ENCODE measurements at regions of chr17 and their contacts with region 1.

Region 1: GRCh38 chr17:57849874-57850754 is at the start of gene MRPS23:
- DNase-seq: peak; percentile 99
- ATAC-seq: peak; percentile 82
- H3K4me3 ChIP-seq: peak within 1 kb of the TSS; percentile 88 to 93 (median 90)
- H3K27ac ChIP-seq: peak within 1 kb of the TSS; percentile 86
- H3K4me1 ChIP-seq: peaks cover 62% of the 10 kb centered on the region
- H3K27me3 ChIP-seq: no peaks in the 10 kb centered on the region; a peak in 1 of 5 replicates
- CTCF ChIP-seq: peak; percentile 34; the same call in 1 of the 2 replicates
- EP300 ChIP-seq: peak; percentile 55 to 76; a peak in 3 of 4 replicates
- POLR2A ChIP-seq: peak; percentile 80 to 86
- RAD21 ChIP-seq: peak; percentile 37; the same call in 1 of the 2 replicates
- total RNA-seq, gene MRPS23: 181 and 283 TPM in 2 replicates

Region 2: GRCh38 chr17:57838857-57839570 is 11.1 kb before region 1 on chr17:
- CTCF ChIA-PET with region 1: no interaction called
- POLR2A ChIA-PET with region 1: interaction called, 36 read pairs
- in situ Hi-C with region 1: no loop called
- intact Hi-C with region 1: loop called (anchors 1 kb)
- DNase-seq: no peak
- ATAC-seq: peak; percentile 10
- H3K4me3 ChIP-seq: no peak overlapping the region
- H3K27ac ChIP-seq: peak overlapping the region; percentile 60
- H3K4me1 ChIP-seq: peaks cover 74% of the 10 kb centered on the region
- H3K27me3 ChIP-seq: no peaks in the 10 kb centered on the region
- CTCF ChIP-seq: no peak
- EP300 ChIP-seq: no peak
- POLR2A ChIP-seq: no peak
- RAD21 ChIP-seq: no peak

Region 3: DNA sequence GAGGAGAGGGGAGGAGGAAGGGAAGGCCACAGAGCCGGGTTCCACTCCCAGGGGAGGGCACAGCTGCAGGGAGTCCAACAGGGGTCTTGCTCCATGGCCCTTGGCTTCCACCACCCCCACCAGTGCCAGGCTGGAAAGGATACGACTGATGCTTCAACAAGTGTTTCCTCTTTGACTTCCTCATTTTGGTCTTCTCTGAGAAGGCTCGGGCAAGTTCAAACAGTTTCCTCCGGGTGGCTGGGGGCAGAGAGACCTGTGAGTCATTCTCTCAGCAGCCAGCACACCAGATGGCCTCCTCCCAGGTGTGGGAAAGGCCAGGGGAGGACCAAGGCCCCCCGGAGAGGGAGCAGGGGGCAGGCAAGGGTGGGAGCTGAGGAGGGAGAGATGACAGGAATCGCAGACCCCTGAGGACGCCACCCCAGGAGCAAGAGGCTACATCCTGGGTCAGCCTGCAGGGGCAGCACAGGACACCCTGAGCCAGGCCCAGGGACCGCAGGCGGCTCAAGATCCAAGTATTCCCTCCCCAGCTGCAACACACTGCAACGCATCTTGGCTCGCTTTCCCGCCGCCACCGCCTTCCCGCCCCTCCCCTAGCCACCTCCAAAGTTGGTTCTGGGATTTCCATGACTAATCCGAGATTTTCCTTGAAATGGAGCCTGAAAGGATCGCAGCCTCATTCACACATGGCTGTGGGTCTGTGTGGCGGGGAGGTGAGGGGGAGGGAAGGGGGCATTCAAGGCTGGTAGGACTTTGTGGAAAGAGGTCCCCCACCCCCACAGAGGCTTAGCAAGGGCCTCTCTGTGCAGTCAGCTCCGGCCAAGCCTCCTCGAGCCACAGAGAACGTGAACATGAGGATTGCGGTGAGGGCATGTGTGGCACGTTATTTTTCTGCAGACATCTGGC is 18.1 kb after region 1 on chr17:
- CTCF ChIA-PET with region 1: no interaction called
- POLR2A ChIA-PET with region 1: interaction called, 177 read pairs
- in situ Hi-C with region 1: no loop called
- intact Hi-C with region 1: no loop called
- DNase-seq: peak; percentile 59
- ATAC-seq: peak; percentile 65
- H3K4me3 ChIP-seq: no peak overlapping the region
- H3K27ac ChIP-seq: peak overlapping the region; percentile 19
- H3K4me1 ChIP-seq: peaks cover 55% of the 10 kb centered on the region
- H3K27me3 ChIP-seq: no peaks in the 10 kb centered on the region; a peak in 1 of 5 replicates
- CTCF ChIP-seq: peak; percentile 56
- EP300 ChIP-seq: peak in 1 of 2 experiments; percentile 36; a peak in 2 of 4 replicates
- POLR2A ChIP-seq: peak in 1 of 2 experiments; percentile 37; a peak in 2 of 4 replicates
- RAD21 ChIP-seq: peak; percentile 15; the same call in 1 of the 2 replicates

Region 4: GRCh38 chr17:57987580-57988421 is 137.7 kb after region 1 on chr17 and contains the start of gene VEZF1:
- CTCF ChIA-PET with region 1: no interaction called
- POLR2A ChIA-PET with region 1: interaction called, 173 read pairs
- in situ Hi-C with region 1: no loop called
- intact Hi-C with region 1: no loop called
- DNase-seq: peak; percentile 68
- ATAC-seq: peak; percentile 61
- H3K4me3 ChIP-seq: peak within 1 kb of the TSS; percentile 71 to 95 (median 83)
- H3K27ac ChIP-seq: peak within 1 kb of the TSS; percentile 80
- H3K4me1 ChIP-seq: peaks cover 82% of the 10 kb centered on the region
- H3K27me3 ChIP-seq: no peaks in the 10 kb centered on the region; a peak in 1 of 5 replicates
- CTCF ChIP-seq: peak; percentile 12; the same call in 1 of the 2 replicates
- EP300 ChIP-seq: no peak; a peak in 1 of 4 replicates
- POLR2A ChIP-seq: peak in 1 of 2 experiments; percentile 27; a peak in 3 of 4 replicates
- RAD21 ChIP-seq: peak; percentile 35
- total RNA-seq, gene VEZF1: 45.9 and 48.0 TPM in 2 replicates

Region 5: GRCh38 chr17:58082870-58083490 is 232.9 kb after region 1 on chr17 and contains the start of gene DYNLL2:
- CTCF ChIA-PET with region 1: no interaction called
- POLR2A ChIA-PET with region 1: interaction called, 15 read pairs
- in situ Hi-C with region 1: no loop called
- intact Hi-C with region 1: no loop called
- DNase-seq: peak; percentile 85
- ATAC-seq: peak; percentile 76
- H3K4me3 ChIP-seq: peak within 1 kb of the TSS; percentile 90 to 99 (median 95)
- H3K27ac ChIP-seq: peak within 1 kb of the TSS; percentile 78
- H3K4me1 ChIP-seq: peaks cover 50% of the 10 kb centered on the region
- H3K27me3 ChIP-seq: peaks cover 0 to 14% of the 10 kb centered on the region in 2 experiments; a peak in 3 of 5 replicates
- CTCF ChIP-seq: no peak
- EP300 ChIP-seq: no peak
- POLR2A ChIP-seq: peak; percentile 66 to 76; a peak in 3 of 4 replicates
- RAD21 ChIP-seq: no peak
- total RNA-seq, gene DYNLL2: 29.0 and 34.8 TPM in 2 replicates